Activated CD4-positive, alpha-beta memory T cell treated with anti-CD3 and anti-CD28 coated beads for 36 hours (primary cell): ENCODE measurements at regions of chr9 and their contacts with region 1.

Region 1: DNA sequence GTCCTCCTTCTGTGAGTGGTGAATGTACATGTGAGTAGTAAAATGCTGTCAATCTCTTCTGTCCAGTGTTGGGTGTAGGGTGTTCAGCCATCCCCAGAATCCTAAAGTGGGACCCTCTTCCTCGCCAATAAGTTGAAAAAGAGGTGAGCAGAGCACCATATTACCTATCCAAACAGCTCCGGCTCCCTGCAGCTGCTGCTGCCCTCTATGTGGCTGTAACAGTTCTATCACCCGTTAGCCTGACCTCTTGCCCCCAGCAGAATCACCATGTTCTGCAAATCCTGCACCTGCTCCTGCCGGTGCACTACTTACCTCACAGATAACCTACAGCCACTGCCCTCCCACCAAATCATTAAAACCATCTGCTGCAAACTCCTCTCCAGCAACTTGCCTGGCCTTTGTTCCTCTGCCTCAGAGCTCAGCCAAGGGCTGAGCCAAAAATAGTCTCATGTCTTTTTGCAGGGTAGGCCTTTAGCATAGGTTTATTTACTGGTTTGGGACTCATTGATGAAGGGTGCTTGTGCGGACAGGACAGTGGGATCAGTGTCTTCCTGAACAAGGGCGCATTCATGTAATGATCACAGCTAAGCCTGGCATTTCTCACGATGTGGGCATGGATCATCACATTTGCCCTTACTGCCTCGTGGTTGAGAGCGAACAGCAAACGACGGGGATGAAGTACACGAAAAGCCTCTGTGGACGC is 49.6 kb upstream of the CCL21 start:
- DNase-seq: no peak
- H3K4me3 Mint-ChIP-seq: no peak overlapping the region
- H3K27ac Mint-ChIP-seq: no peak overlapping the region
- H3K4me1 Mint-ChIP-seq: peaks cover 2% of the 10 kb centered on the region
- H3K27me3 Mint-ChIP-seq: peaks cover 30% of the 10 kb centered on the region

Region 2: DNA sequence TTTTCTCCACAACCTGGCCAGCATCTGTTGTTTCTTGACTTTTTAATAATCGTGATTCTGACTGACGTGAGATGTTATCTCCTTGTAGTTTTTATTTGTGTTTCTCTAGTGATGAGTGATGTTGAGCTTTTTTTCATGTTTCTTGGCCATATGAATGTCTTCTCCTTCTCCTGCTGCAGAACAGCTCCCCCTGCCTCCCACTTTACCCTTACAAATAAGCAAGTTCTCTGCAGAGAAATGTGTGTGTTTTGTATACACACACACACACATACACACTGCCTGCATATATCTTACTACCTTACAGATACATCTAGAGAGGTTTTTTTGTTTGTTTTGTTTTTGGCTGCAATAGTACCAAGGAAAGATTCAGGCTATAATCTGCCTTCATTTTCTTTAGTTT is 109.8 kb after region 1 on chr9:
- CTCF ChIA-PET with region 1: interaction called, 12 read pairs
- POLR2A ChIA-PET with region 1: no interaction called
- intact Hi-C with region 1: no loop called
- DNase-seq: no peak
- H3K4me3 Mint-ChIP-seq: no peak overlapping the region
- H3K27ac Mint-ChIP-seq: no peak overlapping the region
- H3K4me1 Mint-ChIP-seq: no peaks in the 10 kb centered on the region
- H3K27me3 Mint-ChIP-seq: peaks cover 4% of the 10 kb centered on the region

Region 3: DNA sequence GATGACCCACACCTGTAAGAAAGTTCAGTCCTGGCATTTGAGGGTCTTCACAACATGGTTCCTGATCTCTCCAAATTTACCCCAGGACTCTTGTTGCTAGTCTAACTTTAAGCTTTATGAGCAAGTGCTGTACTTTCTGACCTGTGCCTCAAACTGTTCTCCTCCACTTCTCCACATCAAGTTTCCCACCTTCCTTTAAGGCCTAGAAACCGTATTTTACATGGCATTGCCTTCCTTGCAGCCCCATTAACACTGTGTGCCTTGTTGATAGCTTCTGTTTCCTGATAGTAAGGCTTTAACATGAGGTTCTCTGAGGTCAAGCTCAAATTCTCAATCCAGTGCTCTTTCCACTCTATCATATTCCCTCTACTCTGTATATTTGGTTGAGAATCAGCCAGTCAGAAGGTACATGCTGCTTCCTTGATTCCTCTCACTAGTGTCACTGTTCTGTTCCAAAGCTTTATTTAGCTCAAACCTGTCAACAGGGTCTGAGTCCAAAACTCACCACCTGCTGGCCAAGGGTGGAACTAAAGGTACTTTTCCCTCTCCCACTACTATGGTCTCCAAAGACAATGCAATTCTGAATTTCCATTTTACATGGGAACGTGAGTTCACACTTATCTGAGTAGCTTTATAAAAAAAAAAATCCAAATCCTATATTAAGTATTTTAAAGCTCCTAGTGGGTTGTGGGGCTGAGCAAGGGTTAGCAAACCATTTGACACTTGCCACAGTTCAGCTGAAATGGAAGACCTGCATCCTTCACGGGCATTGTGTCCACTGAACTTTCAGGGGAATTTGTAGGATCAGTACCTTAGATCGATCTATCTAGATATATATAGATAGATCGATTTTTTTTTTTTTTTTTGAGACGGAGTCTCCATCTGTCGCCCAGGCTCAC is 291.7 kb after region 1 on chr9:
- CTCF ChIA-PET with region 1: interaction called, 11 read pairs
- POLR2A ChIA-PET with region 1: no interaction called
- intact Hi-C with region 1: no loop called
- DNase-seq: peak; percentile 63
- H3K4me3 Mint-ChIP-seq: no peak overlapping the region
- H3K27ac Mint-ChIP-seq: no peak overlapping the region
- H3K4me1 Mint-ChIP-seq: no peaks in the 10 kb centered on the region
- H3K27me3 Mint-ChIP-seq: no peaks in the 10 kb centered on the region